ENCODE measurements at regions of chr2 and their contacts with region 1.

Region 1: DNA sequence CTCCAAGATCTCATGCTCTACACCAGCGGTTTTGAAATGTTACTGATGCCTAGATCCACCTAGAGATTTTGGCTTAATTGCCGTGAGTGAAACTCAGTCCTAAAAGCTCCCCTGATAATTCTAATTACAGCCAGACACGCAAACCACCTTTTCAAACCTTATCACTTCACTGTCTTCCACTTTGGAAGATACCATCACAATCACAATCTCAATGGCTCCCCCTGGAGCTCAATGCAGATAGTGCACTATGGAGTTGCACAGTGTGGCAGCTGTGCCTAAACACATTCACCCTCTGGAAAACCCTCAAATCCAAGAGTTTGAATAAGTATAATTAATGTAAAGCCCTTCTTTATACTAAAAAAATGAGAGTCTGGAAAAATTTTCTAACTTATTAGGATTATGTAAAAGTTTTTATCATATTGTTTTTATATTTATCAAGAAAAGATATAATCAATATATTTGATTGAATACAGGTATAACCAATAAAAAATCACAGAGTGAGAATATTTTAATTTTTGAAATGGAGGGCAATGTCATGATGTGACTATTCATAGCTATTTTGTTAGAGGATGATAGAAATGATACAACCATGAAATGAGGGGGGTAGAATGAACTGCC is 102.9 kb upstream of the SLC8A1 start:
- DNase-seq: peak in 1 of 2 donors; percentile 76
- H3K4me3 ChIP-seq: no peak overlapping the region
- H3K27ac ChIP-seq: no peak overlapping the region
- H3K4me1 ChIP-seq: no peaks in the 10 kb centered on the region
- H3K27me3 ChIP-seq: no peaks in the 10 kb centered on the region
- CTCF ChIP-seq: peak; percentile 69 to 86 (median 78)

Region 2: DNA sequence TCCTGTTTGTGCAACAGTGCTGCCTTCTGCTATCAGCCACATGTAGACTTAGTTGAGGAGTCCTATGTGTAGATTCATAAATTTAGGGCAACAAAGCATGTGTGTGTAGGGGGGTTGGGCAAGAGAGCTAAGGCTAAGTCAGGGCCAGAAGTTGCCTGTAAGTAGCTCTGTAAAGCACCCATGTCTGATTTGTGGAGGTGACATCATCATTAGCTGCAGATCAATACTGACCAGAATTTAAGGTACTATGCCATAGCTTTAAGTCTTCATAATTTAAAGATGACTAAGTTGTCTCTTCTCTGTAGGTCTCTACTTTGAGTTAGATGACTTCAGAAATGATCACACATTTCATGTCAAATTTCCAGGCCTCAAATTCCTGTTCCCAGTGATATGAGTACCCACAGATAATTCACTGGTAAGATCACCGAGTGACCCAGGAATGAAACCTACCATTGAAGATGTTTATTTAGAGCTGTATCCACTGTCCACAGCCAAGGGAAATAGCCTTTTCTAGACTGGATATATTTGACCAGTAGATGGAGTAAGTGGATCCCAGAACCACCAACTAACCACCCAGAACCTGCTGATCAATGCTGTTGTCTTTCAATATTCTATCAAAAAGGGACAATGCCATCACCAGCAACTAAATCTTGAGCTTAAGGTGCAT is 341.8 kb before region 1 on chr2:
- intact Hi-C with region 1: loop called (anchors 10 kb)
- DNase-seq: no peak
- H3K4me3 ChIP-seq: no peak overlapping the region
- H3K27ac ChIP-seq: no peak overlapping the region
- H3K4me1 ChIP-seq: no peaks in the 10 kb centered on the region
- H3K27me3 ChIP-seq: no peaks in the 10 kb centered on the region
- CTCF ChIP-seq: peak; percentile 5 to 38 (median 34)

Region 3: GRCh38 chr2:40244675-40245074 is 310.1 kb before region 1 on chr2:
- intact Hi-C with region 1: loop called (anchors 10 kb)
- DNase-seq: peak in 1 of 2 donors; percentile 70
- H3K4me3 ChIP-seq: no peak overlapping the region
- H3K27ac ChIP-seq: peak overlapping the region in 1 of 2 donors; percentile 34
- H3K4me1 ChIP-seq: peaks cover 0 to 12% of the 10 kb centered on the region in 2 donors
- H3K27me3 ChIP-seq: no peaks in the 10 kb centered on the region
- CTCF ChIP-seq: peak; percentile 26 to 57 (median 53)

Region 4: DNA sequence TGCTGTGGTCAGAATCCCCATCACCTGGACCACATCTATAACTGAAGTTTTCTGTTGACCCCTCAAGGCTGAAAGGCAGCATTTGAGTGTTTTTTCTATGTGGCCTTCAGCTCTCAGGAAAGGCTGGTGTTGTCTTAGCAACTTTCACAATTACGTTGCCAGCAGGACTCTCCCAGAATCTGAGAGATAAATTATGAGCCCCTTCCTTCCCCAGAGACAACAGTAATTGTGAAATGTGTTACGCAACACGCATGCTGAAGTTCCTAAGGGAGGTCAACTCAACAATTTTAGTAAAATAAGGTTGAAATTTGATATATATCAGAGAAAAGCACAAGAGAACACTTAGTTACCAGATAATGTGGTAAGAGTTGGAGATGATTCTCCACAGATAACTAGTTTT is 113.6 kb after region 1 on chr2:
- intact Hi-C with region 1: no loop called
- DNase-seq: no peak
- H3K4me3 ChIP-seq: no peak overlapping the region
- H3K27ac ChIP-seq: no peak overlapping the region
- H3K4me1 ChIP-seq: peaks cover 0 to 2% of the 10 kb centered on the region in 2 donors
- H3K27me3 ChIP-seq: no peaks in the 10 kb centered on the region
- CTCF ChIP-seq: no peak

Measured in ascending aorta (tissue), 2 donors.